H1 (cell line): ENCODE measurements at regions of chr3 and their contacts with region 1.

Region 1: DNA sequence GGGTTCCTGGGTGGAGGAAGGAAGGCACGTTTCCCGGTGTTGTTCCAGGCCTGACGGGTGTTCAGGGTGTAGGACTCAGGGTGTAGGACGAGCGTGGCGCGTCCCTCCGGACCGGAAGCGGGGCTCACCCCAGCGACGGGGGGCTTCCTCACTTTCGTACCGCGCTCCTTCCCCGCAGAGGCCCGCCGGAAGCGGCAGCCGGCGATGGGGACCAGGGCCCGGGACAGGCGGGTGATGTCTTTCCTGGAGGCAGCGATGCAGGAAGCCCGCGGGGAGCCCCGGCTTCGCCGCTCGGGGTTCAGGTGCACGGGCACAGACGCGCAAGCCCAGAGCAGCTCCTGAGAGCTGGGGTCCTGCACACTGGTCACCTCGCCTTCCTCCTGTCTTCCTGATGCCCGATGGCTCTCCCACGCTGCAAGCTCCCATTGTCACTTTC is 13.4 kb downstream of the FOXL2NB start:
- DNase-seq: no peak
- H3K4me3 ChIP-seq: peak overlapping the region in 2 of 4 experiments; percentile 21 to 31; a peak in 3 of 8 replicates
- H3K27ac ChIP-seq: no peak overlapping the region
- H3K4me1 ChIP-seq: no peaks in the 10 kb centered on the region; a peak in 1 of 7 replicates
- H3K27me3 ChIP-seq: peaks cover 5 to 15% (median 10%) of the 10 kb centered on the region in 4 experiments
- CTCF ChIP-seq: no peak
- EP300 ChIP-seq: no peak
- POLR2A ChIP-seq: no peak
- RAD21 ChIP-seq: no peak

Region 2: GRCh38 chr3:138935848-138936740 is 24.3 kb before region 1 on chr3:
- CTCF ChIA-PET with region 1: interaction called, 38 read pairs
- POLR2A ChIA-PET with region 1: interaction called, 6 read pairs
- DNase-seq: peak in 1 of 2 experiments; percentile 99
- H3K4me3 ChIP-seq: peak overlapping the region; percentile 11 to 59 (median 39); a peak in 7 of 8 replicates
- H3K27ac ChIP-seq: no peak overlapping the region
- H3K4me1 ChIP-seq: peaks cover 9 to 28% (median 19%) of the 10 kb centered on the region in 4 experiments
- H3K27me3 ChIP-seq: peaks cover 46 to 69% (median 59%) of the 10 kb centered on the region in 4 experiments
- CTCF ChIP-seq: peak in 2 of 3 experiments; percentile 84 to 86; a peak in 3 of 4 replicates
- EP300 ChIP-seq: no peak
- POLR2A ChIP-seq: no peak; a peak in 1 of 3 replicates
- RAD21 ChIP-seq: peak; percentile 32 to 63; a peak in 3 of 4 replicates

Region 3: GRCh38 chr3:138941259-138941885 is 19.1 kb before region 1 on chr3:
- CTCF ChIA-PET with region 1: interaction called, 38 read pairs
- POLR2A ChIA-PET with region 1: interaction called, 84 read pairs
- DNase-seq: peak in 1 of 2 experiments; percentile 88
- H3K4me3 ChIP-seq: no peak overlapping the region
- H3K27ac ChIP-seq: no peak overlapping the region
- H3K4me1 ChIP-seq: peaks cover 6 to 39% (median 23%) of the 10 kb centered on the region in 4 experiments
- H3K27me3 ChIP-seq: peaks cover 96 to 100% (median 98%) of the 10 kb centered on the region in 4 experiments
- CTCF ChIP-seq: peak in 2 of 3 experiments; percentile 89 to 92; a peak in 3 of 4 replicates
- EP300 ChIP-seq: no peak
- POLR2A ChIP-seq: no peak
- RAD21 ChIP-seq: peak; percentile 61 to 75

Region 4: DNA sequence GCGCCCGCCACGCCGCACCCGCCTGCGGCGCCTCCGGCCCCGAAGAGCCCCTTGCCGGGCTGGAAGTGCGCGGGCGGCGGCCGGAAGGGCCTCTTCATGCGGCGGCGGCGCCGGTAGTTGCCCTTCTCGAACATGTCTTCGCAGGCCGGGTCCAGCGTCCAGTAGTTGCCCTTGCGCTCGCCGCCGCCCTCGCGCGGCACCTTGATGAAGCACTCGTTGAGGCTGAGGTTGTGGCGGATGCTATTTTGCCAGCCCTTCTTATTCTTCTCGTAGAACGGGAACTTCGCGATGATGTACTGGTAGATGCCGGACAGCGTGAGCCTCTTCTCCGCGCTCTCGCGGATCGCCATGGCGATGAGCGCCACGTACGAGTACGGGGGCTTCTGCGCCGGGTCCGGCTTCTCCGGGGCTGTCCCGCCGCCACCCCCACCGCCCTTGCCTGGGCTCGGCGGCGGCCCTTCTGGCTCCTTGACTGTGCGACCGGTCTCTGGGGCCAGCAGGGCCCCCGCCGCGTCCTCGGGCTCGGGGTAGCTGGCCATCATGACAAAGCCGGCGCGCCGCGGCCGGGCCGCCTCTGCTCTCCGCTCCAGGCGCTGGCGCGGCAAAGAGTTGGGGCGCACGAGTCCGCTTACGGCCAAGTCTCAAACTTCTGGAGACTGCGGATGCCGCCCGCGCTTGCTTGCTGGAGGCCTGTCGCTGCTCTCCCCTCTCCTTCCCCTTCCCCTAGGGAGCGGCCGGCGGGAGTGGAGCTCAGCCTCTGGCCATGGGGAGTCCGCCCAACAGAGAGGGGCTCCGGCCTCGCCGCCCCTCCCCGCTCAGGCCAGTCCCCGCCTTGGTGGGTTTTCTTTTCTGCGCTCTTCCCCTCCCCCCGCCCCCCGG is 14.0 kb before region 1 on chr3:
- CTCF ChIA-PET with region 1: interaction called, 38 read pairs
- POLR2A ChIA-PET with region 1: interaction called, 84 read pairs
- DNase-seq: peak in 1 of 2 experiments; percentile 79
- H3K4me3 ChIP-seq: peak overlapping the region; percentile 37 to 67 (median 46)
- H3K27ac ChIP-seq: no peak overlapping the region
- H3K4me1 ChIP-seq: peaks cover 7 to 50% (median 21%) of the 10 kb centered on the region in 4 experiments
- H3K27me3 ChIP-seq: peaks cover 83 to 100% (median 96%) of the 10 kb centered on the region in 4 experiments
- CTCF ChIP-seq: peak in 2 of 3 experiments; percentile 41 to 48; a peak in 3 of 4 replicates
- EP300 ChIP-seq: no peak
- POLR2A ChIP-seq: peak in 1 of 2 experiments; percentile 14; a peak in 1 of 3 replicates
- RAD21 ChIP-seq: no peak